CD8-positive, alpha-beta T cell (primary cell): ENCODE measurements at regions of chr11 and their contacts with region 1.

Region 1: DNA sequence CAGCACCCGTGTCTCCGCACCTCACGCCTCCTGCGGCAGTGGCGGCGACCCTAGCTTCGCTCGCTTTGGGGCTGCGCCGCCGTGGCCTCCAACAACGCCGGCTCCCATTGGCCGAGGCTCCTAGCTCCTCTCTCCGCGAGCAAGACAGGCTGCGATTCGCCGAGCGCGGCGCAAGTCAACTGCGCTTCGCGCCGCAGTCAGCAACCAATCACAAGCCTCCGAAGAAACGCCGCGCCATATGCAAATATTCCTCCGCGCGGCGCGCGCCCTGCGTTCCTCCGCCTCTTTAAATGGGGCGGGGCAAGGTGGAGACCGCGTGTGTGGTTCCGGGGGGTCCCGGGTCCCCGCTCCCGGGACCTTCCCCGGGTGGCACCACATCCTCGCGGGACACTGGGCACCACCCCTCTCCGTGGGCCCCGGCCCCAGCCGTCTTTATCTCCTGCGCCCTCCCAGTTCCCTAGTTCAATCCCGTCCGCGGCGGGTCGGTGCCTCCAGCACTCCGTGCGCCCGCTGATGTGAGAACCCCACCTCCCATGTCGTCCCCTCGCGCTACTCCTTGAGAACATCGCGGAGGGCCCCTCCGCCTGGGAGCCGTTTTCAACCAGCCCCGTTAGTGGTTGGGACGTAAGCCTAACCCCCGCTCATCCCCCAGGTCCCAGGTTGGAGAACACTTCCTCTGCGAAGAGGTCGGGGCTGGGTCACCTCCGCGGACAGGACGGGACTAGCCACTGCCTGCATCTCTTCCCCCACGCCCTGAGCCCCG is at the start of gene NAP1L4:
- DNase-seq: peak; percentile 87 to 99 (median 97)
- ATAC-seq: peak; percentile 81
- H3K4me3 ChIP-seq: peak within 1 kb of the TSS; percentile 80 to 85
- H3K4me3 Mint-ChIP-seq: peak within 1 kb of the TSS; percentile 97
- H3K27ac ChIP-seq: peak within 1 kb of the TSS; percentile 74 to 75
- H3K27ac Mint-ChIP-seq: peak within 1 kb of the TSS; percentile 98
- H3K4me1 ChIP-seq: peaks cover 19% of the 10 kb centered on the region
- H3K4me1 Mint-ChIP-seq: peaks cover 27% of the 10 kb centered on the region
- H3K27me3 ChIP-seq: no peaks in the 10 kb centered on the region
- H3K27me3 Mint-ChIP-seq: no peaks in the 10 kb centered on the region
- CTCF ChIP-seq: no peak
- total RNA-seq, gene NAP1L4: 276 to 290 TPM

Region 2: GRCh38 chr11:2951231-2952110 is 40.9 kb before region 1 on chr11:
- CTCF ChIA-PET with region 1: no interaction called
- POLR2A ChIA-PET with region 1: interaction called, 3 read pairs
- intact Hi-C with region 1: loop called in 1 of 2 experiments (anchors 5 kb)
- DNase-seq: no peak
- ATAC-seq: no peak
- H3K4me3 ChIP-seq: no peak overlapping the region
- H3K4me3 Mint-ChIP-seq: no peak overlapping the region
- H3K27ac ChIP-seq: no peak overlapping the region
- H3K27ac Mint-ChIP-seq: peak overlapping the region; percentile 13
- H3K4me1 ChIP-seq: peaks cover 4% of the 10 kb centered on the region
- H3K4me1 Mint-ChIP-seq: peaks cover 37% of the 10 kb centered on the region
- H3K27me3 ChIP-seq: no peaks in the 10 kb centered on the region
- H3K27me3 Mint-ChIP-seq: no peaks in the 10 kb centered on the region
- CTCF ChIP-seq: no peak

Region 3: GRCh38 chr11:2963112-2963817 is 29.1 kb before region 1 on chr11:
- CTCF ChIA-PET with region 1: no interaction called
- POLR2A ChIA-PET with region 1: no interaction called
- intact Hi-C with region 1: no loop called
- DNase-seq: no peak
- ATAC-seq: no peak
- H3K4me3 ChIP-seq: no peak overlapping the region
- H3K4me3 Mint-ChIP-seq: no peak overlapping the region
- H3K27ac ChIP-seq: no peak overlapping the region
- H3K27ac Mint-ChIP-seq: no peak overlapping the region
- H3K4me1 ChIP-seq: no peaks in the 10 kb centered on the region
- H3K4me1 Mint-ChIP-seq: peaks cover 39% of the 10 kb centered on the region
- H3K27me3 ChIP-seq: no peaks in the 10 kb centered on the region
- H3K27me3 Mint-ChIP-seq: no peaks in the 10 kb centered on the region
- CTCF ChIP-seq: no peak

Region 4: GRCh38 chr11:2975594-2975993 is 16.8 kb before region 1 on chr11:
- CTCF ChIA-PET with region 1: interaction called, 22 read pairs
- POLR2A ChIA-PET with region 1: interaction called, 4 read pairs
- intact Hi-C with region 1: loop called (anchors 1 to 2 kb)
- DNase-seq: peak in 8 of 9 experiments; percentile 21 to 79 (median 62)
- ATAC-seq: peak; percentile 96
- H3K4me3 ChIP-seq: no peak overlapping the region
- H3K4me3 Mint-ChIP-seq: no peak overlapping the region
- H3K27ac ChIP-seq: no peak overlapping the region
- H3K27ac Mint-ChIP-seq: peak overlapping the region; percentile 73
- H3K4me1 ChIP-seq: peaks cover 25% of the 10 kb centered on the region
- H3K4me1 Mint-ChIP-seq: peaks cover 65% of the 10 kb centered on the region
- H3K27me3 ChIP-seq: no peaks in the 10 kb centered on the region
- H3K27me3 Mint-ChIP-seq: no peaks in the 10 kb centered on the region
- CTCF ChIP-seq: peak; percentile 60

Region 5: DNA sequence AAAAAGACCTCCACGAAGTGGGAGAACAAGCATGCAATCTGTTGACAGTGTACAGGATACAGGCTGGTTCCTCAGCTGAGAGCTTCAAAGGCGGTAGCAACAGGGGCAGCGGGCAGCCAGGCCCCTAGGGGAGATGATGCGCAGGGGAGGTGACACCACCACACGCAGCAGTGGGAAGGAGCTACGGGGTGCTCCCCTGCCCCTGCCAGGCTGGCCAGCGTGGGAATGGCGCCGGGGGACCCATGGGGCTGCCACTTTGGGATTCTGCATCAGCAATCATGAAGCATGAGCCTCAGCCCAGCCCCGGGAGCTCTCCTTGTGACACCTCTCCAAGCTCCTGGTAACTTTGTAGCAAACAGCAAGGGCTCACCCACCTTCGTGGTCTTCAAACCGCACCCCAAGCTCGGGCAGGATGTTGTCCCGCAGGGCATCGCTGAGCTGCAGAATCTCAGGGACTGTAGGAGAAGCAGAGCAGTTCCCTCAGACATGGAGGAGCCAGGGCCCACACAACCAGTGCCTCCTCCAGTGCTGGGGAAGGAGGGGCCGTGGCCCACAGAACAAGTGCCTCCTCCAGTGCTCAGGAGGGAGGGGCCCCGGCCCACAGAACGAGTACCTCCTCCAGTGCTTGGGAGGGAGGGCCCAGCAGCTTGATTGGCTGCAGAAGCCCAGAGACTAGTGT is 14.2 kb after region 1 on chr11:
- CTCF ChIA-PET with region 1: interaction called, 6 read pairs
- POLR2A ChIA-PET with region 1: interaction called, 39 read pairs
- intact Hi-C with region 1: loop called in 1 of 2 experiments (anchors 1 kb)
- DNase-seq: peak; percentile 33 to 83 (median 74)
- ATAC-seq: peak; percentile 99
- H3K4me3 ChIP-seq: peak overlapping the region; percentile 45 to 57
- H3K4me3 Mint-ChIP-seq: peak overlapping the region; percentile 89
- H3K27ac ChIP-seq: peak overlapping the region in 1 of 2 experiments; percentile 52
- H3K27ac Mint-ChIP-seq: peak overlapping the region; percentile 91
- H3K4me1 ChIP-seq: peaks cover 46% of the 10 kb centered on the region
- H3K4me1 Mint-ChIP-seq: peaks cover 69% of the 10 kb centered on the region
- H3K27me3 ChIP-seq: no peaks in the 10 kb centered on the region
- H3K27me3 Mint-ChIP-seq: no peaks in the 10 kb centered on the region
- CTCF ChIP-seq: no peak

Region 6: GRCh38 chr11:3057069-3057963 is 64.9 kb after region 1 on chr11 and contains the start of gene CARS1:
- CTCF ChIA-PET with region 1: no interaction called
- POLR2A ChIA-PET with region 1: interaction called, 3 read pairs
- intact Hi-C with region 1: loop called (anchors 1 kb)
- DNase-seq: peak; percentile 79 to 96 (median 92)
- ATAC-seq: peak; percentile 97
- H3K4me3 ChIP-seq: peak within 1 kb of the TSS; percentile 88 to 93
- H3K4me3 Mint-ChIP-seq: peak within 1 kb of the TSS; percentile 87
- H3K27ac ChIP-seq: peak within 1 kb of the TSS; percentile 73 to 76
- H3K27ac Mint-ChIP-seq: peak within 1 kb of the TSS; percentile 79
- H3K4me1 ChIP-seq: peaks cover 17% of the 10 kb centered on the region
- H3K4me1 Mint-ChIP-seq: peaks cover 38% of the 10 kb centered on the region
- H3K27me3 ChIP-seq: no peaks in the 10 kb centered on the region
- H3K27me3 Mint-ChIP-seq: no peaks in the 10 kb centered on the region
- CTCF ChIP-seq: no peak
- total RNA-seq, gene CARS1: 34.2 to 34.7 TPM